Activated B cell treated with CpG ODN at 0.5 μM for 24 hours (primary cell): ENCODE measurements at regions of chr2 and their contacts with region 1.

Region 1: GRCh38 chr2:25301453-25302352 is 40.0 kb downstream of the DNMT3A start:
- DNase-seq: peak; percentile 61
- ATAC-seq: peak; percentile 95
- H3K4me3 Mint-ChIP-seq: peak overlapping the region; percentile 42
- H3K27ac Mint-ChIP-seq: peak overlapping the region; percentile 46
- H3K4me1 Mint-ChIP-seq: peaks cover 39% of the 10 kb centered on the region
- H3K27me3 Mint-ChIP-seq: no peaks in the 10 kb centered on the region
- CTCF ChIP-seq: no peak

Region 2: GRCh38 chr2:25135413-25135812 is 166.3 kb before region 1 on chr2:
- CTCF ChIA-PET with region 1: no interaction called
- POLR2A ChIA-PET with region 1: no interaction called
- intact Hi-C with region 1: no loop called
- DNase-seq: no peak
- ATAC-seq: no peak
- H3K4me3 Mint-ChIP-seq: no peak overlapping the region
- H3K27ac Mint-ChIP-seq: no peak overlapping the region
- H3K4me1 Mint-ChIP-seq: peaks cover 9% of the 10 kb centered on the region
- H3K27me3 Mint-ChIP-seq: peaks cover 46% of the 10 kb centered on the region
- CTCF ChIP-seq: no peak

Region 3: GRCh38 chr2:25252281-25253105 is 49.2 kb before region 1 on chr2:
- CTCF ChIA-PET with region 1: no interaction called
- POLR2A ChIA-PET with region 1: no interaction called
- intact Hi-C with region 1: loop called (anchors 2 kb)
- DNase-seq: peak; percentile 46
- ATAC-seq: peak; percentile 65
- H3K4me3 Mint-ChIP-seq: peak overlapping the region; percentile 78
- H3K27ac Mint-ChIP-seq: no peak overlapping the region
- H3K4me1 Mint-ChIP-seq: peaks cover 29% of the 10 kb centered on the region
- H3K27me3 Mint-ChIP-seq: no peaks in the 10 kb centered on the region
- CTCF ChIP-seq: no peak

Region 4: GRCh38 chr2:25320077-25320476 is 18.4 kb after region 1 on chr2:
- CTCF ChIA-PET with region 1: no interaction called
- POLR2A ChIA-PET with region 1: interaction called, 10 read pairs
- intact Hi-C with region 1: loop called (anchors 2 kb)
- DNase-seq: no peak
- ATAC-seq: peak; percentile 58
- H3K4me3 Mint-ChIP-seq: no peak overlapping the region
- H3K27ac Mint-ChIP-seq: no peak overlapping the region
- H3K4me1 Mint-ChIP-seq: peaks cover 36% of the 10 kb centered on the region
- H3K27me3 Mint-ChIP-seq: no peaks in the 10 kb centered on the region
- CTCF ChIP-seq: no peak

Region 5: GRCh38 chr2:25402477-25402876 is 100.8 kb after region 1 on chr2:
- CTCF ChIA-PET with region 1: no interaction called
- POLR2A ChIA-PET with region 1: no interaction called
- intact Hi-C with region 1: loop called (anchors 2 kb)
- DNase-seq: no peak
- ATAC-seq: peak; percentile 5
- H3K4me3 Mint-ChIP-seq: no peak overlapping the region
- H3K27ac Mint-ChIP-seq: peak overlapping the region; percentile 95
- H3K4me1 Mint-ChIP-seq: peaks cover 88% of the 10 kb centered on the region
- H3K27me3 Mint-ChIP-seq: no peaks in the 10 kb centered on the region
- CTCF ChIP-seq: no peak